ENCODE measurements at regions of chr20 and their contacts with region 1.

Region 1: DNA sequence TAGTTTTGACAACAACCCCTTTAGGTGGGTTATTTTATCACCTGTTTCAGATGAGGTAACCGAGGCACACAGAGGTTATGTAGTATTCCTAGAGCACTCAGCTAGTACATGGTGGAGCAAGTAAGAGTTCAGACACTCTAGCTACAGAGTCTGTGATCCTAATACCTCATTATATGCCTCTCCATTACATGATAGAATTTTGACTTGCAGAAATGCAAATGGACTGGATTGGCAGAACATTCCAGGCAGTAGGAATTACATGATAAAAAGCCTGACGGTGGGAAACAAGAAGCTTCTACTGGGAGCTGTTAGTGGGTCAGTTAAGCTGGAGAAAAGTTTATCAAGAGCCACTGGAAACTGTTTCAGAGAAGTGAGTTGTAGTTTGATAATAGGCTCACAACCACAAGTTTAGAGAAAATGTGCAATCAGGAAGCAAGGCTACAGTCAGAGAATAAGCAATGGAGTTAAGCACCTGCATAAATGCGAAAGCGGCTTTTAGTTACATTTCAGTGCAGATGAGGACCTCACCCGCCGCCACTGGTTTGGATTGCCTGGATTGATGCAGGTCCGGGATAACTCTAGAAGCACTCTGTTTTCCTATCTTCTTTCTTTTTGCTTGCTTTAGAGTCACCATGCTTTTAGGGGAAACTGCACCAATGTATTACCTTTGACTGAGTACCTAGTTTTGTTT is 34.7 kb upstream of the MYLK2 start:
- DNase-seq: no peak
- ATAC-seq: no peak
- H3K4me3 ChIP-seq: no peak overlapping the region
- H3K4me3 Mint-ChIP-seq: no peak overlapping the region
- H3K27ac ChIP-seq: no peak overlapping the region
- H3K27ac Mint-ChIP-seq: no peak overlapping the region
- H3K4me1 ChIP-seq: no peaks in the 10 kb centered on the region
- H3K4me1 Mint-ChIP-seq: no peaks in the 10 kb centered on the region
- H3K27me3 ChIP-seq: no peaks in the 10 kb centered on the region
- H3K27me3 Mint-ChIP-seq: no peaks in the 10 kb centered on the region
- CTCF ChIP-seq: no peak

Region 2: DNA sequence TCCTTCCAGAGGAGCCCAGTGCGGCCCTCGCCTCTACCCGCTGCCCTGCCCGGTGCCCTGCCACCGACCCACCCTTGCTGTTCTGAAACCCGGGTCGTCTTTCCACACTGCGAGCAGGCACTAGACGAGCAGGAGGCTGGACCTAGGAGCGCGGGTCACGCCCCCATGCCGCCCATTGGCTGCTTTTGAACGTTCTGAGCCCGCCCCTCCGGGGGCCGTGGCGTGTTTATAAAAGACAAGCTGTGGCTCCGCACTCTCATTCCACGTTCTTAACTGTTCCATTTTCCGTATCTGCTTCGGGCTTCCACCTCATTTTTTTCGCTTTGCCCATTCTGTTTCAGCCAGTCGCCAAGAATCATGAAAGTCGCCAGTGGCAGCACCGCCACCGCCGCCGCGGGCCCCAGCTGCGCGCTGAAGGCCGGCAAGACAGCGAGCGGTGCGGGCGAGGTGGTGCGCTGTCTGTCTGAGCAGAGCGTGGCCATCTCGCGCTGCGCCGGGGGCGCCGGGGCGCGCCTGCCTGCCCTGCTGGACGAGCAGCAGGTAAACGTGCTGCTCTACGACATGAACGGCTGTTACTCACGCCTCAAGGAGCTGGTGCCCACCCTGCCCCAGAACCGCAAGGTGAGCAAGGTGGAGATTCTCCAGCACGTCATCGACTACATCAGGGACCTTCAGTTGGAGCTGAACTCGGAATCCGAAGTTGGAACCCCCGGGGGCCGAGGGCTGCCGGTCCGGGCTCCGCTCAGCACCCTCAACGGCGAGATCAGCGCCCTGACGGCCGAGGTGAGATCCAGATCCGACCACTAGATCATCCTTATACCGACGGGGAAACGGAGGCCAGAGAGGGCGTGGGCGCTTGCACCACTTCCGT is 179.2 kb before region 1 on chr20 and contains the start of gene ID1:
- CTCF ChIA-PET with region 1: no interaction called
- POLR2A ChIA-PET with region 1: no interaction called
- intact Hi-C with region 1: no loop called
- DNase-seq: peak; percentile 92
- ATAC-seq: peak; percentile 90
- H3K4me3 ChIP-seq: peak within 1 kb of the TSS; percentile 50 to 79 (median 66)
- H3K4me3 Mint-ChIP-seq: peak within 1 kb of the TSS; percentile 96
- H3K27ac ChIP-seq: peak within 1 kb of the TSS in 1 of 2 donors; percentile 24
- H3K27ac Mint-ChIP-seq: peak within 1 kb of the TSS; percentile 74
- H3K4me1 ChIP-seq: peaks cover 24 to 26% of the 10 kb centered on the region in 2 donors
- H3K4me1 Mint-ChIP-seq: peaks cover 29% of the 10 kb centered on the region
- H3K27me3 ChIP-seq: peaks cover 0 to 66% (median 35%) of the 10 kb centered on the region in 4 experiments
- H3K27me3 Mint-ChIP-seq: peaks cover 45% of the 10 kb centered on the region
- CTCF ChIP-seq: peak; percentile 1
- total RNA-seq, gene ID1: 3.4 and 4.4 TPM in 2 replicates

Region 3: GRCh38 chr20:31770243-31770642 is 14.3 kb before region 1 on chr20:
- CTCF ChIA-PET with region 1: no interaction called
- POLR2A ChIA-PET with region 1: interaction called, 11 read pairs
- intact Hi-C with region 1: no loop called
- DNase-seq: no peak
- ATAC-seq: no peak
- H3K4me3 ChIP-seq: no peak overlapping the region
- H3K4me3 Mint-ChIP-seq: no peak overlapping the region
- H3K27ac ChIP-seq: no peak overlapping the region
- H3K27ac Mint-ChIP-seq: no peak overlapping the region
- H3K4me1 ChIP-seq: no peaks in the 10 kb centered on the region
- H3K4me1 Mint-ChIP-seq: no peaks in the 10 kb centered on the region
- H3K27me3 ChIP-seq: no peaks in the 10 kb centered on the region
- H3K27me3 Mint-ChIP-seq: no peaks in the 10 kb centered on the region
- CTCF ChIP-seq: no peak